Activated T-helper 1 cell treated with anti-CD3 and anti-CD28 coated beads, Interleukin-12 subunit alpha, Interleukin-12 subunit beta, Interleukin-2, Interleukin-4 antibody, amounts not matched to agents 30 ng/mL and 10 ng/mL and 1 ng/mL, durations not matched to agents 14 hours and 24 hours and 36 hours (primary cell): ENCODE measurements at regions of chr16 and their contacts with region 1.

Region 1: GRCh38 chr16:361872-362701 is 8.3 kb downstream of the MRPL28 start:
- DNase-seq: peak; percentile 60
- H3K4me3 Mint-ChIP-seq: no peak overlapping the region
- H3K27ac Mint-ChIP-seq: no peak overlapping the region
- H3K4me1 Mint-ChIP-seq: peaks cover 6% of the 10 kb centered on the region
- H3K27me3 Mint-ChIP-seq: peaks cover 1% of the 10 kb centered on the region

Region 2: GRCh38 chr16:106623-107324 is 255.3 kb before region 1 on chr16:
- intact Hi-C with region 1: loop called (anchors 1 kb)
- DNase-seq: peak; percentile 34
- H3K4me3 Mint-ChIP-seq: no peak overlapping the region
- H3K27ac Mint-ChIP-seq: no peak overlapping the region
- H3K4me1 Mint-ChIP-seq: peaks cover 5% of the 10 kb centered on the region
- H3K27me3 Mint-ChIP-seq: no peaks in the 10 kb centered on the region

Region 3: DNA sequence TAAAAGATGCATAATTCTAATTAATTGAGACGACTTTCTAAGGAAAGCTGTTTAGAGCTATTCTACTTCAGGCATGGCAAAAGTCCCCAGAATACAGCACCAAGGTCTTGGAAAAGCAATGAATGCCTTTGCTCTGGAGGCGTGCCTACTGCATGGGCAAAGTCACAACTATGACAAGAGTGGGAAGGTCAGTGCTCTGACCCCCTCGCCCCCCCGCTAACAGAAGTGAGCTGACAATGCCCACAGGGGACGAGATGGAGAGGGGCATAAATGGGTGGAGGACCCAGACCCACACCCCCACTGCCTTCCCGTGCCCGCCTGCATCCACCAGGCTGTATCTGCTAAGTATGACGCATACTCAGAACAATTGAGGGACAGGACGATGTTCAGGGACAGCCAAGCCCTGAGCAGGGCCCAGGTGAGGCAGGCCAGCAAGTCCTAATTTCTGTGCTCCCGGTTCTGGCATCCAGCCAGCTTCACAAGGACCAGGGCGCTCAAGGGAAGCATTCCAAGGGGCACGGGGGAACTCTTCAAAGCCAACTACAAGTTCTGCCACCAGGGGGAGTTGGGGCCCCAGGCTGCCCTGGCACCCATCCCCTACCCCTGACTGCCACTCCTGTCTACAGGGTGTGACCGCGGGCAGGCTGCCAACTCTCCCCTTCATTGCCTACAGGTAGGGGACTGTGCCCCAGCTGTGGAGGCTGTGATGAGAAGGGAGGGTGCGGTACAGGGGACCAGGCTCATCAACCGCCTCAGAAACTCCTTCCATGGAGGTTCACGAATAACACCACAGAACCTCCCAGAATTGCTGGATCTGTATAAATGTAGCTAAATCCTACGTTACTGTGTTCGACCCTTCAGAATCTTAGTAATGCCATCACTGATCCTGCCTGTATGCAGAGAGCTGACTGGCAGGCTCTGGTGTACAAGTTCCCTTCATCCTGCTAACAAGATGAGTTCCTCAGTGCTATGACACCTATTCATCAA is 244.4 kb before region 1 on chr16:
- intact Hi-C with region 1: loop called (anchors 1 kb)
- DNase-seq: peak; percentile 42
- H3K4me3 Mint-ChIP-seq: no peak overlapping the region
- H3K27ac Mint-ChIP-seq: no peak overlapping the region
- H3K4me1 Mint-ChIP-seq: peaks cover 12% of the 10 kb centered on the region
- H3K27me3 Mint-ChIP-seq: no peaks in the 10 kb centered on the region